Heart left ventricle (tissue), 16 donors: ENCODE measurements at regions of chr14 and their contacts with region 1.

Region 1: DNA sequence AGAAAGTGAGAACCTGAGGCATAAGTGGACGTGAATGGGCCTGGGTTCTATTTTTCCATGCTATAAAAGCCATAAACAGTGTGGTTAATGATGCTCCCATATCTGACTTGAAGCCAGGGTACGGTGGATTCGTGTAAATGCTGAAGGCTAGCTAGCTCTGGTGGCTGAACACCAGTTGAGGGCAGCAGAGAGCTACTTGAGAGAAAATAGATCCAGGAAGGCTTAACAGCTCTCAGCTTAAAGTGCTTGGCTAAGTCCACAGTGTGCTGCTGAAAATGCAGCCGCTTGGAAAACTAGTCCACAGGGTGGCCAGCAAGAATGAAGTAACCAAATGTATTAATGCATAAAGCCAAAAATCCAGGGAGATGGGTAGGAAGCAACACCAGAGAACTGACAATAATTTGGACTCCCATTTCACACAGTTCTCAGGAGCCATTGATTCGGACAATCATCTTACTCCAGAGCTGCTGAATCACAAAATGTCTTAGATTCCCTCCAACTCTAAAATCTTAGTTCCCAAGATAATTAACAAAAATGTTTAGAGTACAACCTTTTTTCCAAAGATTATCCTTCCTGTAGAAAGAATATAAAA is 15.0 kb upstream of the FOXG1 start:
- DNase-seq: no peak
- ATAC-seq: no peak
- H3K4me3 ChIP-seq: no peak overlapping the region
- H3K27ac ChIP-seq: no peak overlapping the region
- H3K4me1 ChIP-seq: no peaks in the 10 kb centered on the region
- H3K27me3 ChIP-seq: peaks cover 8 to 55% (median 23%) of the 10 kb centered on the region in 9 donors
- CTCF ChIP-seq: peak in 8 of 12 donors; percentile 9 to 43 (median 33)
- POLR2A ChIP-seq: no peak

Region 2: GRCh38 chr14:28406196-28406595 is 345.4 kb before region 1 on chr14:
- intact Hi-C with region 1: no loop called
- DNase-seq: no peak
- ATAC-seq: no peak
- H3K4me3 ChIP-seq: no peak overlapping the region
- H3K27ac ChIP-seq: no peak overlapping the region
- H3K4me1 ChIP-seq: no peaks in the 10 kb centered on the region
- H3K27me3 ChIP-seq: no peaks in the 10 kb centered on the region
- CTCF ChIP-seq: no peak
- POLR2A ChIP-seq: no peak

Region 3: GRCh38 chr14:28807518-28807917 is 56.0 kb after region 1 on chr14:
- intact Hi-C with region 1: no loop called
- DNase-seq: no peak
- ATAC-seq: no peak
- H3K4me3 ChIP-seq: no peak overlapping the region
- H3K27ac ChIP-seq: no peak overlapping the region
- H3K4me1 ChIP-seq: no peaks in the 10 kb centered on the region
- H3K27me3 ChIP-seq: no peaks in the 10 kb centered on the region
- CTCF ChIP-seq: no peak
- POLR2A ChIP-seq: no peak

Region 4: DNA sequence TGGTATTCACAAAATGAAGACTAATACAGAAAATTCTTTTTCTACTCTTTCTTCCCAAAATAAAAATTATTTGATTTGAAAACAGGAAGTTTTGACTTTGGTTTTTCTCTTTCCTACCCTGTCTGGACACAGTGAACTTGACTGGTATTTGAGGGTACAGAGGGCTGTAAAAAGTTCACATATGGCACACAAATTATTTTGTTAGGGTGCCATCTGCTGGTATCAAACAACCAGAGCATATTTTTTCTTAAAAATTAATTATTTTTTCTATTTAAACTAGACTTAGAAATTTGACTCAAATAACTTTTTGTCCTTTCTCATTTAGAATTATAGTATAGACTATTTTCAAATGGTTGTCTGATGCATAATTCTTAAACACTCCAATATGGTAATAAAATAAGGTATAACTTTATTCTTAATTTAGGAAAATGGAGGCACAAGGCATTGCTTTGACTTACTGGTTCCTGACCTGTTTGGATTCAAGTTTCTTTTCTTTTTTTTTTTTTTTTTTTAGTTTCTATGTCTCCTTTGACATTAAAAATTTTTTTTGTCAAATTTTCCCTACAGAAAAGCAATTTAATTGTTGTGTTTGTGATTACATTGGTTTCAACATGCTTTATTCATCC is 785.4 kb after region 1 on chr14:
- intact Hi-C with region 1: loop called in 7 of 10 experiments (anchors 5 to 10 kb)
- DNase-seq: no peak
- ATAC-seq: no peak
- H3K4me3 ChIP-seq: no peak overlapping the region
- H3K27ac ChIP-seq: no peak overlapping the region
- H3K4me1 ChIP-seq: no peaks in the 10 kb centered on the region
- H3K27me3 ChIP-seq: no peaks in the 10 kb centered on the region
- CTCF ChIP-seq: peak in 11 of 12 donors; percentile 13 to 50 (median 33)
- POLR2A ChIP-seq: no peak

Region 5: DNA sequence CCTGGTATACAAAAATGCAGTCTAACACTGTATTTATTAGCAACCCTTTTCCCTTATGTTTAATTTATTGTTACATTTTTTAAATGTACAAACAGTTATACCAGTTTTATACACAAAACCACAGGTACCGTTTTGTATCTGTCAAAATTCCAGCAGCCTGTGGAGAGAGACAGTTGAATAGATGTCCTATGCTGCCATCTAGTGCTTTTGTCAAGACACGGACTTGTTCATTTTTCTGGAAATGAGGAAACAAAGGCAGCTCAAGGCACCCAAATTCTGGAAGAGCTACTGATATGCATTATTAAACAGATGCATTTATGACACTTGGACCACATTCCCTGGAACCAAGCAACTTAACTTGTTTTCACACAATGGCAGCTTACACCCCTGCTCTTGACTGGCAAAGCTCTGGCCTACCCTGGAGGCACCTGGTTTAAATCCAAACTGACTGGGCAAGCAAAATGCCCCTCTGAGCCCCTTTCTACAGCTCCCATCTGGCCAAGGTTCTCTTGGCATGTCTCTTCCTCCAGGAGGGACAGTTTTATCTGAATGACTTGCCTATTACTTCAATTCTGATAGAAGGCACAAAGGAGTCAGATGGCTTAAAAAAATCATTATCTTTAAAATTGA is 1463.0 kb after region 1 on chr14:
- intact Hi-C with region 1: loop called in 9 of 10 experiments (anchors 5 to 10 kb)
- DNase-seq: no peak
- ATAC-seq: peak in 2 of 4 donors; percentile 33 to 41
- H3K4me3 ChIP-seq: no peak overlapping the region
- H3K27ac ChIP-seq: no peak overlapping the region
- H3K4me1 ChIP-seq: no peaks in the 10 kb centered on the region
- H3K27me3 ChIP-seq: peaks cover 0 to 6% (median 0%) of the 10 kb centered on the region in 9 donors
- CTCF ChIP-seq: peak in 11 of 12 donors; percentile 36 to 67 (median 55)
- POLR2A ChIP-seq: no peak

Region 6: DNA sequence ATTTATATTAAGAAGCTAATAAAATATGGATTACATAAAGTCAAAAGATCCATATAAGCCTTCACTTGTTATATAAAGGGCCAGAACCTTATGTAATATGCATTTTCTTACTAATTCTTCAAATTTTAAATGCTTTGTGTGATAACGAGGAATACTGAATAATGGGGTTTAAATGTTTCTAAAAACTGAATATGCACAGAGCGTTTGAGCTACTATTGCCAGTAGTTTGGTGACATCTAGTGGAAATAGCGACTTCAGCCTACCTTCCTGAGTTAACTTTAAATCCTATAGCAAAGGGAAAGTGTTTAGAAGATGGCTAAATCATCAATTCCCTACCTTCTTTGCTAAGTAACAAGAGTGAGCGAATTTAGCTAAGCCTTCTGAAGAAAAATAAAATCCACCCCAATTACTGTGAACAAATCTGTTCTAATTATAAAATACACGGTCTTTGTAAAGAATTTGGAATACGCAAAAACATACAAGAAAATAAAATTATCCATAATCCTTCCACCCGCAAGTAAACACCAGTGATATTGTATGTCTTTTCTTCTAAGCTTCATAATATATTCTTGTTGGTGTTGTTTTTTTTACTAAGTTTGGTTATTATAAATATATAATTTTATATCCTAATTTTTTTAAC is 1691.9 kb after region 1 on chr14:
- intact Hi-C with region 1: loop called in 1 of 10 experiments (anchors 10 kb)
- DNase-seq: no peak
- ATAC-seq: no peak
- H3K4me3 ChIP-seq: no peak overlapping the region
- H3K27ac ChIP-seq: no peak overlapping the region
- H3K4me1 ChIP-seq: no peaks in the 10 kb centered on the region
- H3K27me3 ChIP-seq: peaks cover 0 to 3% (median 0%) of the 10 kb centered on the region in 9 donors
- CTCF ChIP-seq: peak; percentile 26 to 64 (median 46)
- POLR2A ChIP-seq: no peak